ENCODE measurements at regions of chr15 and their contacts with region 1.

Region 1: DNA sequence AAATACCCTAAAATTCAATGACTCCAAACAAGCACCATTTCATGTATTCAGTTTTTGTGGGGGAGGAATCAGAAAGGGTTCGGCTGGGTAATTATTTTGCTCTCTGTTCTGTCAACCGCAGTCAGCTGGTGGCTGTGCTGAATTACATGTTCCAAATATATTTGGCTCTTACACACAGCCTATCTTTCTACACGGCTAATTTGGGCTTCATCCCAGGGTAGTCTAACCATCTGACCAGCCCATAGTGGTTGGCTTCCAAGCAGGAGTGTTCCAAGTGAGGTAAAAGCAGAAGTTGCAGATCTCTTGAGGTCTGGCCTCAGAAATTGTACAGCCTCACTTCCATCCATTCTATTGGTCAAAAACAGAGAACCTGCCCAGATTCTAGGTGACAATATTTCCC is 760.8 kb upstream of the SEMA6D start:
- DNase-seq: peak; percentile 49
- ATAC-seq: peak; percentile 99

Region 2: DNA sequence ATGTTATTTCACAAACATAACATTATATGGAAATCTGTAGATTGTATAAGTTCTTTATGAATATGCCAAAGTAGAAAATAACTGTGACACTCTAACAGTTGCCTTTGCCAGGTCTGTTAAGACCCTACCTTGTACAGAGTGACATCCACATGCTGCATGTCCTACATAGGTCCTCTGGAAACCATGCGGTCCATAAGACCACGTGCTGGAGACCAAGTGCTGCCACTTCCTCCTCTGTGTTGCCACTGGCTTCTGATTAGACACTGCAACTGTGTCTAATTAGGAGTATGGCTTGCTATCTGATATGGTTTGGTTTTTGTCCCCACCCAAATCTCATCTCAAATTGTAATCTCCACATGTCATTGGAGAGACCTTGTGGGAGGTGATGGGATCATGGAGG is 94.7 kb before region 1 on chr15:
- intact Hi-C with region 1: loop called (anchors 5 kb)
- DNase-seq: no peak
- ATAC-seq: no peak

Region 3: DNA sequence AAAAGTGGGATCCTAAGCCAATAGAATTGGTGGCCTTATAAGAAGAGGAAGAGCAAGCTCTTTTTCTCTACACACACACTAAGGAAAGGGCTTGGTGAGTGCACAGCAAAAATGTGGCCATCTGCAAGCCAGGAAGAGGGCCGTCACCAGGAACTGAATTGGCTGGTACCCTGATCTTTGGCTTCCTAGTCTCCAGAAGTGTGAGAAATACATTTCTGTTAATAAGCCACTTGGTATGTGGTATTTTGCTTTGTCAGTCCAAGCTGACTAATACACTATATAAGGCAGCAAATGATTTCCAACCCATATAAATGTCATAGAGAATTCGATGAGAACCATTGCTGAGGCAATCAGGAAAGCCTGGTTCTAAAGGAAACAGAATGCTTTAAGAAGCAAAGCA is 55.5 kb before region 1 on chr15:
- intact Hi-C with region 1: no loop called
- DNase-seq: no peak
- ATAC-seq: no peak

Region 4: DNA sequence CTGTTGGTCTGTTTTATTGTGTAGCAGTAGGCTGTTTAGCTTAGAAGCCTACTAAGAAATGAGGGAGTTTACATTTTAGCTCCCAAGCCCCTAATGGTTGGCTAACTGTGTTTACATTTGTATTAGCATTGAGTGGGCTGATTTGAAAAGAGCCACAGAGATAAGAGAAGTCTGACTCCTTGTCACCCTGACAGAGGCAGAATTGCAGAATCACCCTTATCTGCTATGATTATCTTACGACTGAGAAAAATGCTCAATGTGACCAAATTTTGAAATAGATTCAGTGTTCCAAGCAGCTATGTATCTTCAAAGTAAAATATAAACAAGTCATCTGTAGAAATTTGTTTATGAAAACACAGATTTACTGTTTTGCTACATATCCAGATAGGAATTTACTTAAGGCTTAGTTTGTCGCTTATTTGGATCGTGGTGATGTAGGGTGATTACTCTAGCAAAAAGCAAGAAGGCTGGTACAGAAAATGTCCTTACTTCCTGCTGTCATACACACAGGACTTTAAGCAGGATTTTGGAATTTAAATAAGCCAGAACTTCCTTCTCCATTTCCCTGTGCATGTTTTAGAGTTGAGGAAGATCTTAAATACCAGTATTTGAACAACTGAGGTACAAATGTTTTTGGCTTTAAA is 779.8 kb after region 1 on chr15:
- intact Hi-C with region 1: loop called (anchors 5 kb)
- DNase-seq: no peak
- ATAC-seq: no peak

Measured in Right ventricle myocardium inferior (tissue), 1 donor.